Activated naive CD4-positive, alpha-beta T cell treated with anti-CD3 and anti-CD28 coated beads for 36 hours (primary cell): ENCODE measurements at regions of chr10 and their contacts with region 1.

Region 1: GRCh38 chr10:96089670-96090462 is 40.2 kb upstream of the ZNF518A start:
- DNase-seq: peak; percentile 95
- H3K4me3 Mint-ChIP-seq: peak overlapping the region; percentile 92
- H3K27ac Mint-ChIP-seq: peak overlapping the region; percentile 98
- H3K4me1 Mint-ChIP-seq: peaks cover 5% of the 10 kb centered on the region
- H3K27me3 Mint-ChIP-seq: peaks cover 13% of the 10 kb centered on the region

Region 2: GRCh38 chr10:96017191-96017687 is 72.6 kb before region 1 on chr10:
- CTCF ChIA-PET with region 1: no interaction called
- intact Hi-C with region 1: loop called (anchors 2 kb)
- DNase-seq: peak; percentile 53
- H3K4me3 Mint-ChIP-seq: no peak overlapping the region
- H3K27ac Mint-ChIP-seq: no peak overlapping the region
- H3K4me1 Mint-ChIP-seq: no peaks in the 10 kb centered on the region
- H3K27me3 Mint-ChIP-seq: no peaks in the 10 kb centered on the region

Region 3: DNA sequence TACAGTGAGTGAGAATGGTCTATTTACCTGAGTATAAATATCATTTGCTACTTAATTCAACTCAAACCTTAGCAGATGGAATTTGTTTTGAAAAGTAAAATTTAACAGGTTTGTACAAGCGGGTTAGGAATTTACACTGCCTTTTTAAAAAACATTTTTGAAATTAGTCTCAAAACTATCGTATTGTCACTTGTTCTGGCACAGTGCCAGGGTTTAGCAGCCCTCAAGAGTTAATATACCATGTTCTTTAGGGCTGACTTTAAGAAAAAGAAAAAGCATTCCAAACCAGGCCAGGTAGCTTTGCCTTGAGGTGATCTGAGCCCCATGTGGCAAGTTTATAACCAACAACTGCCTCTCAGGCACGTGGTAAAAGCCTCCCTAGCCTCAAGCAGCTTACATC is 28.6 kb before region 1 on chr10:
- CTCF ChIA-PET with region 1: no interaction called
- intact Hi-C with region 1: loop called (anchors 1 kb)
- DNase-seq: no peak
- H3K4me3 Mint-ChIP-seq: no peak overlapping the region
- H3K27ac Mint-ChIP-seq: no peak overlapping the region
- H3K4me1 Mint-ChIP-seq: peaks cover 16% of the 10 kb centered on the region
- H3K27me3 Mint-ChIP-seq: no peaks in the 10 kb centered on the region

Region 4: GRCh38 chr10:96112531-96112930 is 22.7 kb after region 1 on chr10:
- CTCF ChIA-PET with region 1: no interaction called
- intact Hi-C with region 1: no loop called
- DNase-seq: no peak
- H3K4me3 Mint-ChIP-seq: no peak overlapping the region
- H3K27ac Mint-ChIP-seq: no peak overlapping the region
- H3K4me1 Mint-ChIP-seq: no peaks in the 10 kb centered on the region
- H3K27me3 Mint-ChIP-seq: peaks cover 70% of the 10 kb centered on the region

Region 5: DNA sequence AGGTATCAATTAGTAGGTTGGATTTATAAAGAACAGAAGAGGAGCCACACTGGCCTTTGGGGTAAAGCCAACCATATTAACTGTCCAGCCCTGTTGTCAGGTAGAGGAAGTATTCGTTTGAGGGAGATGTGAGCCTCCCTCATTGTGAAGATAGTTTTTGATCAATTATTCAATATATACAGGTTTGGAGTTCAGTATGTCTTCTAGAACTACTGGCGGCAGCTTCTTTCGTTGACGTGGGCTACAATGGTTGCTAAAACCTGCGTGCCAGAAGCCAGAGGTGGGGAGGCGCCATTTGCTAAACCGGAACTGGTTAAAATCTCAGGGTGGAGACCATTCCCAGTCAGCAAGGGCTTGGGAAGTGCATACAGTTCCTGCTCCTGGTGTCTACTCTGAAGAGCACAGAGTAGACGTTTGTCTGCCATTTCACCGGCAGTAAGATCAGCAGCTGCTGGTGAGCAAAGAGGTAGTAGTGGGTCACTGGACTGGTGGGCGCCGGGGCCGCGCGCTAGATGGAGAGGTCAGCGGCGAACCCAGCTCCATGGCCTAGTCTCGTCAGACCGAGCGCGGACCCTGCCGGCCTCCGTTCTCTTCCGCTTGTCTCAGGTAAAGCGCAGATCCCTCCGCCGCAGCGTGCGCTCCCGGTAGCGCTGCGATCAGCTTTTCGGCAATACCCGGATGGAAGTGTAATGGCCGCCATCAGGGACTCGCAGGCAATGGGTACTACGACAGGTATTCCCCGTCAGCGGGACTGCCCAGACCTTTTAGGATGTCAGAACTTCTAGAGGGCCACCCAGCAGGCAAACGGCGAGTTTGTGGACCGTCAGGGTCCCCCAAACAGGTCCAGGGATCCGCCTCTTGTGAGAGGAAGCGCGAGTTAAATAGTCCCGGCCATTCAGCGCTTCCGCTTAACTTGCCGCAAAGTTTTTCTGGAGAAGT is 39.8 kb after region 1 on chr10 and contains the start of gene ZNF518A:
- CTCF ChIA-PET with region 1: interaction called, 14 read pairs
- intact Hi-C with region 1: loop called (anchors 1 kb)
- DNase-seq: peak; percentile 91
- H3K4me3 Mint-ChIP-seq: peak within 1 kb of the TSS; percentile 97
- H3K27ac Mint-ChIP-seq: peak within 1 kb of the TSS; percentile 99
- H3K4me1 Mint-ChIP-seq: peaks cover 13% of the 10 kb centered on the region
- H3K27me3 Mint-ChIP-seq: peaks cover 30% of the 10 kb centered on the region
- total RNA-seq, gene ZNF518A: 10.7 to 12.1 TPM

Region 6: GRCh38 chr10:96339957-96340904 is 250.4 kb after region 1 on chr10:
- CTCF ChIA-PET with region 1: no interaction called
- intact Hi-C with region 1: no loop called
- DNase-seq: peak; percentile 83
- H3K4me3 Mint-ChIP-seq: no peak overlapping the region
- H3K27ac Mint-ChIP-seq: no peak overlapping the region
- H3K4me1 Mint-ChIP-seq: peaks cover 6% of the 10 kb centered on the region
- H3K27me3 Mint-ChIP-seq: no peaks in the 10 kb centered on the region